CD8-positive, alpha-beta T cell (primary cell): ENCODE measurements at regions of chr17 and their contacts with region 1.

Region 1: GRCh38 chr17:10297691-10298090 is 75.1 kb downstream of the MYH13 start:
- DNase-seq: no peak
- ATAC-seq: no peak
- H3K4me3 ChIP-seq: no peak overlapping the region
- H3K4me3 Mint-ChIP-seq: no peak overlapping the region
- H3K27ac ChIP-seq: no peak overlapping the region
- H3K27ac Mint-ChIP-seq: no peak overlapping the region
- H3K4me1 ChIP-seq: no peaks in the 10 kb centered on the region
- H3K4me1 Mint-ChIP-seq: no peaks in the 10 kb centered on the region
- H3K27me3 ChIP-seq: no peaks in the 10 kb centered on the region
- H3K27me3 Mint-ChIP-seq: peaks cover 9% of the 10 kb centered on the region
- CTCF ChIP-seq: no peak

Region 2: GRCh38 chr17:10278213-10278612 is 19.5 kb before region 1 on chr17:
- CTCF ChIA-PET with region 1: no interaction called
- POLR2A ChIA-PET with region 1: no interaction called
- intact Hi-C with region 1: loop called in 1 of 2 experiments (anchors 2 kb)
- DNase-seq: no peak
- ATAC-seq: no peak
- H3K4me3 ChIP-seq: no peak overlapping the region
- H3K4me3 Mint-ChIP-seq: no peak overlapping the region
- H3K27ac ChIP-seq: no peak overlapping the region
- H3K27ac Mint-ChIP-seq: no peak overlapping the region
- H3K4me1 ChIP-seq: no peaks in the 10 kb centered on the region
- H3K4me1 Mint-ChIP-seq: no peaks in the 10 kb centered on the region
- H3K27me3 ChIP-seq: no peaks in the 10 kb centered on the region
- H3K27me3 Mint-ChIP-seq: peaks cover 17% of the 10 kb centered on the region
- CTCF ChIP-seq: no peak